ENCODE measurements at regions of chr18 and their contacts with region 1.

Region 1: DNA sequence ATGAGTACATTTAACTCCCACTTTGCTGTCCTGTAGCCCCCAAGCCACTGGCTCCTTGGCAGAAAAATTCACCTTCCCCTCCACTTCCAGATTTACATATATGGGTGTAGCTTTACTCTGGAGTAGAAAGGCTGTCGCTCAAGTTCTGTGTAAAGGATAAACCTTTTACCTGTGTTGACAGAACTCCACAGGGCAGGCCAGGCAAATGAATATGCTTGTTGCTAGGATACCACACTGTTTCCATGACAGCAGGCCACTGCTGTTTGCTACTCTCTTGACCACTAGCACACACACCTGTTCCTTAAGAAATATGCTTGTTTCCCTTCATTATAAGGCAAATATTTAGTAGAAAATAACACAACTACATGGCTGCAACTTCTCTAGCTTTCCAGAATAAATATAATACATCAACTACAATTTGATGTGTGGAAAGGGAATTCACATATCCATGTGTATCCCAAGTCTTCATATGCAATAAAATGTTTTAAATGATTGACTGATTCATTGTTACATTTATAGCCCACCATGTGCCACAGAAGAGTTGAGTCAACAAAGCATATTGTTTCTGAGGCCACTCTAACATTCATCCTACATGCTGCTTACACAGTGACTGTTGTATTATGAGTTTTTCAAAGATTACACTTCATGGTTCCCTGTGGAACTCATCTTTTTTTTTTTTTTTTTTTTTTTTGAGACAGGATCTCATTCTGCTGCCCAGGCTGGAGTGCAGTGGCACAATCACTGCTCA is 56.2 kb upstream of the ROCK1 start:
- DNase-seq: peak; percentile 80
- ATAC-seq: peak; percentile 52
- H3K4me3 ChIP-seq: no peak overlapping the region
- H3K27ac ChIP-seq: peak overlapping the region; percentile 57; the same call in 1 of the 2 replicates
- H3K4me1 ChIP-seq: peaks cover 42% of the 10 kb centered on the region
- H3K27me3 ChIP-seq: no peaks in the 10 kb centered on the region
- CTCF ChIP-seq: no peak

Region 2: DNA sequence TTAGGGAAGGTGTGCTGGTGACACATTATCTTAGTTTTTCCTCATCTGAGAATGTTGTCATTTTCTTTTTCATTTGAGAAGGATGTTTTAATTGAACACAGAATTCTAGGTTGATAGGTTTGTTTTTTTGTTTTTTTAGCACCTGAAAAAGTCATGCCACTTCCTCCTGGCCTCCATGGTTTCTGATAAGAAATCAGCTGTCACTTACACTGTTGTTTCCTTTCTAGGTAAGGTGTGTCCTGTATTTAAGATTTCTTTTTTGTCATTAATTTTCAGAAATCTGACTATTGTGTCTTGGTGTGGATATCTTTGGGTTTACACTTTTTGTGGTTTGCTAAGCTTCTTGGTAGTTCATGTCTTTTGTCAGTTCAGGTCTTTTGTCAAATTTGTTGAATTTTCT is 155.5 kb before region 1 on chr18:
- CTCF ChIA-PET with region 1: no interaction called
- POLR2A ChIA-PET with region 1: no interaction called
- intact Hi-C with region 1: loop called (anchors 5 kb)
- DNase-seq: no peak
- ATAC-seq: no peak
- H3K4me3 ChIP-seq: no peak overlapping the region
- H3K27ac ChIP-seq: no peak overlapping the region
- H3K4me1 ChIP-seq: peaks cover 8% of the 10 kb centered on the region; the same call in 1 of the 2 replicates
- H3K27me3 ChIP-seq: no peaks in the 10 kb centered on the region
- CTCF ChIP-seq: no peak

Region 3: DNA sequence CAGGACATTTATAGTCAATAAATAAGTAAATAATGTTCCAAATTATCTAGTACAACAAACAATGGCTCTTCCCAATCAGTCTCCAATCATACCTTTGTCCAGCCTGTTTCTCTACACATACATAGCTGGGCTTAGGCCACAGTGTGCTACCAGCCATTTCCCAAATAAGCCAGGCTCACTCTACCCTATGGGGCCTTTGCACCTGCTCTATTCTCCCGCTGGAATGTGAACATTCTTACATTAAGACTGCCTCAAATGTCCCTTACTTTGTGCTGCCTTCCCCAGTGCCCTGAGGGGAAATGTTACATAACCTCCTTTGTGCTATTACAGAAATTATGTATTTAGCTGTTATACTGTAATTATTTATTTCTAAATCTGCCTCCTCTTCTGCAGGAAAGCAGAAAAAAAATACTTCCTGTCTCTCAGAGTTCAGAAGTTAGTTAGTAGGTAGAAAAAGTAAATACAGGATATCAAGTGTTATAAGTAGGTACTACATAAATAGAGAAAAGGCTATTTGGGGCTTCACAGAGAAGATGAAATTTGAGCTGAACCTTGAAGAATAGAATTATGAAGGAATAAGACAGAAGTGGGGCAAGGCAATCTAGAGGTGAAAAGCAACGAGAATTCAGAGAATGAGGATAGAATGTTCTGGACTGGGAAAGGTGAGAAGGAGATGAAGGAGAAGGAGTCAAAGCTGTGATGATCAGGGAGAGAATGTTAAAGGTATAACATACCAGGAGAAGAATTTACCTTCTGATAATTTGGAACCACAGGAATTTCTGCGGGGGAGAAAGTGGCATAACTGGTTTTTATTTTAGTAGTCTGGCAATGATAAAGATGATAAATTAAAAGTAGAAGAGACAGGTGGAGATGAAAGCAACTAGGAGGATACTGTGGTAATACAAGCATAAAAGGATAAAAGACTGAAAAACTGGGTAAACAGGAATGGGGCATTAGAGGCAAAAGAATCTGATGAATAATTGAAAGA is 93.2 kb before region 1 on chr18:
- CTCF ChIA-PET with region 1: no interaction called
- POLR2A ChIA-PET with region 1: no interaction called
- intact Hi-C with region 1: no loop called
- DNase-seq: peak; percentile 88
- ATAC-seq: peak; percentile 71
- H3K4me3 ChIP-seq: peak overlapping the region; percentile 35; the same call in 1 of the 2 replicates
- H3K27ac ChIP-seq: no peak overlapping the region
- H3K4me1 ChIP-seq: peaks cover 22% of the 10 kb centered on the region
- H3K27me3 ChIP-seq: no peaks in the 10 kb centered on the region
- CTCF ChIP-seq: no peak

Region 4: DNA sequence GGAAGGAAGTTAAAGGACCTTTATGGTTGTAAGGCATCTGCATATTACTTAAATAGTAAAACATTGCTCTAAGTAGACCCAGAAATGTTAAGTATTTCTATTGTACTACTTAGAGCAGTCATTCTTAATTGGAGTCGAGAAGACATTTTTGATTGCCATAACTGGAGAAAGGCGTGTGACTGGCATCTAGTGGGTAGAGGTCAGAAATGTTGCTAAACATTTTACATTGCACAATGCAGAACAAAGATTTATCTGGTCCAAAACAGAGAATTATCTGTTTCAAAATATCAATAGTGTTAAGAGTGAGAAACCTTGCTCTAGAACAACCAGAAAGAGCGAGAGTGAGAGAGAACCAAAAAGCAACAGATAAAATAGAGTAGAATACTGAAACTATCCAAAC is 32.9 kb before region 1 on chr18:
- CTCF ChIA-PET with region 1: no interaction called
- POLR2A ChIA-PET with region 1: no interaction called
- intact Hi-C with region 1: no loop called
- DNase-seq: peak; percentile 48
- ATAC-seq: peak; percentile 71
- H3K4me3 ChIP-seq: no peak overlapping the region
- H3K27ac ChIP-seq: no peak overlapping the region
- H3K4me1 ChIP-seq: no peaks in the 10 kb centered on the region
- H3K27me3 ChIP-seq: no peaks in the 10 kb centered on the region
- CTCF ChIP-seq: peak; percentile 67

Region 5: GRCh38 chr18:21327101-21327500 is 159.3 kb after region 1 on chr18:
- CTCF ChIA-PET with region 1: no interaction called
- POLR2A ChIA-PET with region 1: no interaction called
- intact Hi-C with region 1: no loop called
- DNase-seq: peak; percentile 70
- ATAC-seq: no peak; the same call in 1 of the 2 replicates
- H3K4me3 ChIP-seq: no peak overlapping the region
- H3K27ac ChIP-seq: peak overlapping the region; percentile 95
- H3K4me1 ChIP-seq: peaks cover 58% of the 10 kb centered on the region
- H3K27me3 ChIP-seq: no peaks in the 10 kb centered on the region
- CTCF ChIP-seq: no peak

Measured in PC-3 (cell line).